Lower leg skin (tissue), 4 donors: ENCODE measurements at regions of chr1 and their contacts with region 1.

Region 1: DNA sequence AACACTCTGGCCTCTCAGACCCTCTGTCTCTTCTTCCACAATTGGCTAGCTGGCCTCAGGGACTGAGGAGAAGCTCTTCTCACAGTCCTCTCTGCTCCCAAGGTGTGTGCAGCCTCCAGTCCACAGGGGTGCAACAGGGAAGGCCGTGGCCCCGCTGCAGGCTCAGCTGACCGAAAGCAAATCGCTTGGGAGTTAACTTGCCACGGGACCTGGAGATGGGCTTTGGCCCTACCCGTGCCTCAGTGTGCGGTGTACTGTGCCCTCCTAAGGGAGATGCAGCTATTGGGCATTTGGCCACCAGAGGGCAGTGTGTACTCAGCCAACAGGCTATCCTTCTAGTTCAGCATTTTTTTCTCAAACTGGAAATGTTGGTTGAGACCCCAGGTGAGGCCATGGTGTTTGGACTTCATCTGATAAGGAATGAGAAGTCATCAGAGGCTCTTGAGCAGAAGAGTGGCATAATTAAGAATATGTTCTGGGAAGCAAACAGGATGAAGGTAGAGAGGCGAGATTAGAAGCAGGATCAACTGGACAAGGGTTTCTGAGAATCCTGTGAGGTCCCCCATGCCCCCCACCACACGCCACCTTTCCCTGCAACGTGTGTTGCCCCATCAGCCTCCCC is 42.5 kb upstream of the TMEM125 start:
- DNase-seq: peak; percentile 77 to 97
- H3K4me3 ChIP-seq: no peak overlapping the region
- CTCF ChIP-seq: peak in 1 of 3 donors; percentile 79
- POLR2A ChIP-seq: no peak

Region 2: DNA sequence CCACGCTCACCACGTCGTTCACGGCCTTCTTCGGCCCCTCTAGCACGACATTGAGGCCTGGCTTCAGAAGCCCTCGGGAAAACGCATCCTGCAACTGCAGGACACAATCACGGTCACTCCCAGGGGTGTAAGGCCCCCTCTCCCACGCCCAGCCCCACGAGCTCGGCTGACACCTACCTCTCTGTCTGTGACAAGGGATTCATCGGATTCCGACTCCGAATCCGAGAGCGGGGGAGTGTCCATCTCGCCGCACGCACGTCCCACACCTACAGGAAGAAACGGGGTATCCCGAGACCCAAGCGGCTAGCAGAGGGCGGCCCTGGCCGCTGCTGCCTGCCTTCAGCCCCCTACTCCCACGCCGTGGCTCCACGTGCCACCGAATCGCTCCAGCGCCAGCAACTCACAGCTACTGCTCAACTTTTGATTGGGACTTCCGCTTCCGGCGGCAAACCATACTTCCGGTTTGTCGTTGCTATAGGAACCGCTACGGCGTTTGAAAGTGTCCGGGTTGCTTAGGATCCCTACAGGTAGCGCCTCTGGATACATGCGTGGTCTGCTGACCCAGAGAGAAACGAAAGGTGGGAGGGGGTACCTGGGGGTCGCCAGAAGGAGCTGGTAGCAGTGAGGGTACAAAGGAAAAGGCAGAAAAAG is 55.3 kb before region 1 on chr1 and contains the starts of genes CFAP57 and EBNA1BP2:
- intact Hi-C with region 1: no loop called
- DNase-seq: peak; percentile 94 to 98
- H3K4me3 ChIP-seq: peak within 1 kb of the TSS; percentile 91
- CTCF ChIP-seq: no peak
- POLR2A ChIP-seq: no peak
- total RNA-seq, gene CFAP57: 0.19 to 0.38 (median 0.24) TPM
- total RNA-seq, gene EBNA1BP2: 25.2 to 57.2 (median 43.0) TPM

Region 3: GRCh38 chr1:43414634-43415223 is 187.5 kb after region 1 on chr1:
- intact Hi-C with region 1: loop called (anchors 5 kb)
- DNase-seq: peak in 1 of 2 donors; percentile 41
- H3K4me3 ChIP-seq: no peak overlapping the region
- CTCF ChIP-seq: no peak
- POLR2A ChIP-seq: no peak